ENCODE measurements at regions of chr12 and their contacts with region 1.

Region 1: GRCh38 chr12:74412606-74413230 is 124.9 kb upstream of the ATXN7L3B start:
- DNase-seq: no peak
- H3K4me3 ChIP-seq: no peak overlapping the region
- H3K27ac ChIP-seq: no peak overlapping the region
- H3K4me1 ChIP-seq: no peaks in the 10 kb centered on the region
- H3K27me3 ChIP-seq: no peaks in the 10 kb centered on the region
- CTCF ChIP-seq: peak in 4 of 5 experiments; percentile 13 to 38 (median 24)
- EP300 ChIP-seq: no peak
- POLR2A ChIP-seq: no peak

Region 2: GRCh38 chr12:73514672-73515071 is 898.0 kb before region 1 on chr12:
- in situ Hi-C with region 1: no loop called
- intact Hi-C with region 1: loop called (anchors 5 kb)
- DNase-seq: no peak
- H3K4me3 ChIP-seq: no peak overlapping the region
- H3K27ac ChIP-seq: no peak overlapping the region
- H3K4me1 ChIP-seq: no peaks in the 10 kb centered on the region
- H3K27me3 ChIP-seq: no peaks in the 10 kb centered on the region
- CTCF ChIP-seq: no peak
- EP300 ChIP-seq: no peak
- POLR2A ChIP-seq: no peak

Region 3: DNA sequence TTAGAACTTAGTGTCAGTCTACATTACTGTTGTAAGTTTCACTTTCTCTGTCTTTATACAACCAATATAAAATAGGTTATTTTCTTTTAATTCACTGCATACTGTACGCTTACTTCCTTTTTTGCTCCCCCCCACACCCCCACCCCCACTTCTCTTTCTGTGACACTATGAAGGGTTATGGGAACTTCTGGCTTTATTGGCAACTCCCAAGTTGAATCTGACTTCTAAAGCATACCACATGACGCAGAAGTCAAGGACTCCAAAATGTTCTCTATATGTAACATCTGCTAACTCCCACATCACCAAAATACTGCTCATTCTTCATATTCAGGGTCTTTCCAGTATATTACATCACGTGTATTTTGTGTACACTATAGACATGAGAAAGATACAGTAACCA is 43.7 kb after region 1 on chr12:
- in situ Hi-C with region 1: no loop called
- intact Hi-C with region 1: no loop called
- DNase-seq: no peak
- H3K4me3 ChIP-seq: no peak overlapping the region
- H3K27ac ChIP-seq: no peak overlapping the region
- H3K4me1 ChIP-seq: no peaks in the 10 kb centered on the region
- H3K27me3 ChIP-seq: no peaks in the 10 kb centered on the region
- CTCF ChIP-seq: no peak
- EP300 ChIP-seq: no peak
- POLR2A ChIP-seq: no peak

Measured in transverse colon (tissue), 4 donors.